Caco-2 (cell line): ENCODE measurements at regions of chr4 and their contacts with region 1.

Region 1: DNA sequence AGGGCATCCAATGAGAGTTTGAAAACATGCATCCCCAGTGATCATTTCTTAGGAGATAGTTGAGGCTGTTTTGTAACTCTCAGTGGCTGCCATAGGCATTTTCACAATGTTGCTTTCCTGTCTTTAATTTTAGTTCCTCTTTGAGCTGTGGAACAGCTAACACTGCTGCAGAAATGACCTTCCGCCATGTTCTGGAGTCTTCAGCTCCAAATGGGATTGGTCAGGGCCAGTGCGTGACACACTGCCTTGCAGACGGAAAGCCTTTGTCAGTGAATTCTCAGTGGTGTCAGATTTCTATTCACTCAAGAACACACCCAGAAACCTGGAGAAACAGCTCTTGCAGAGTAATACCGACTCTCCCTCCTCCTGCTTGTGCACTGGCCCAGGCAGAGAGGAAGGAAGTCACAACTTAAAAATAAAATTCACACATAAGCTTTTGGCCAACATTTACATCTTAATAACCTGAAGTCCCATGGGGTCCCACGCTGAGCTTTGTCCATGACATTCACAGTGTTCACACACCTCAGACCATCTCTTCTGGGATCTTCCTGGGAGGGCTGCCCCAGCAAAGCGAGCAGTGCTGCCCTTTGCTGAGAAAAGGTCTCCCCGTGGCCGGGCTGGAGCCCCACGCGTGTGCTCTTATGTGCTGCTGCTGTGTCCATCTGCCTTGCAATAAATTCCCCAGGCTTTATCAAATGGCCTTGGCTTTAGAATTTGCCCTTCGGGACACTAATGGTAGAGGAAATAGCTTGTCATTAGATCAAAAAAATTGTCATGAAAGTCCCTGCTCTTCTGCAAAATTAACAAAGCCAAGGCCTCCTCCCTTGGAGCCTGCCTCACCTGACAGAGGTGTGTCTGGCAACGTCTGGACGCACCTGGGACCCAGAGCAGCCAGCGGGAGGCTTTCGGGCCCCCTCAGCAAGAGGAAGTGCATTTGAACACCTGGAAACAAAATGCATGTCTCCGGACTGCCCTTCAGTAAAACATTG is 126.8 kb downstream of the IRF2 start:
- DNase-seq: peak in 1 of 2 experiments; percentile 29
- H3K4me3 ChIP-seq: no peak overlapping the region
- H3K4me3 Mint-ChIP-seq: peak overlapping the region; percentile 71
- H3K27ac Mint-ChIP-seq: peak overlapping the region; percentile 94
- H3K4me1 ChIP-seq: peaks cover 36% of the 10 kb centered on the region
- H3K4me1 Mint-ChIP-seq: peaks cover 42% of the 10 kb centered on the region
- H3K27me3 ChIP-seq: no peaks in the 10 kb centered on the region
- H3K27me3 Mint-ChIP-seq: no peaks in the 10 kb centered on the region
- CTCF ChIP-seq: no peak

Region 2: GRCh38 chr4:184156163-184156920 is 191.2 kb before region 1 on chr4:
- CTCF ChIA-PET with region 1: no interaction called
- POLR2A ChIA-PET with region 1: no interaction called
- intact Hi-C with region 1: no loop called
- DNase-seq: no peak
- H3K4me3 ChIP-seq: no peak overlapping the region
- H3K4me3 Mint-ChIP-seq: no peak overlapping the region
- H3K27ac Mint-ChIP-seq: no peak overlapping the region
- H3K4me1 ChIP-seq: no peaks in the 10 kb centered on the region
- H3K4me1 Mint-ChIP-seq: no peaks in the 10 kb centered on the region
- H3K27me3 ChIP-seq: no peaks in the 10 kb centered on the region
- H3K27me3 Mint-ChIP-seq: peaks cover 24% of the 10 kb centered on the region
- CTCF ChIP-seq: no peak

Region 3: DNA sequence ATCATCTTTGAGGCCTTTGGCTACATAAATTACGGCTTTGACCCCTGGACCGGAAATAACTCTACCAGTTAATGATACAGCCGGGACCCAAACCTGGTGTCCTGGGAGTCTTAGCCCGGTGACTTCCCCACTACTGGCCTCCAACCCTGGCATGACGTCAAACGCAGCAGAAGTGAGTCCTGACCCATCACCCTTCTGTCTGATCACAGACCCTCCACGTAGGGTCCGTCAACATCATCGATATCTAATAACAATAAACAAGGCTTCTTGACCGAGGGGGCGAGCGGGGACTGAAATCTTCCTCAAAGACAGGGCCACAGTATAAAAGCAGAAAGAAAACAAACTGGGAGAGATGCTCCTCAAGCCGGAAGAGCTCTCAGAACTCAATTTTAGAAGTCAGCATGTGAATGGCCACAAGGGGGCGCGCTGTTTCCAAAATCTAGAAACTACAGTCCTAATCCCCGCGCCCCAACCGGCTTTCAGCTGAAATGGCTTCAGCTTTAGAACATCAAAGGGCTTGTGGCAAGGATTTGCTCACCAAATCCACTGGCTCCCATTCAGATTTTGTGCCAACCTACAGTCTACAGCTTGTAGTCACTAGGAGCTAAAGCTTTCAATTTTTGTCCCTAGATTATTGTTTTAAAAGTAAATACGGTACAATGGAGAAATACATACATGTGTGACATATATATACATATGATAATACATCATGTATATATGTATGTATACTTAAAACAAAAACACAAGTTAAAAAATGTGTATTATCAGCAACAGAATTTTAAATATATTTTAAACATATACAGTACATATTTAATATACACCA is 83.4 kb before region 1 on chr4:
- CTCF ChIA-PET with region 1: interaction called, 5 read pairs
- POLR2A ChIA-PET with region 1: no interaction called
- intact Hi-C with region 1: loop called (anchors 2 kb)
- DNase-seq: peak; percentile 85 to 86
- H3K4me3 ChIP-seq: no peak overlapping the region
- H3K4me3 Mint-ChIP-seq: peak overlapping the region; percentile 13
- H3K27ac Mint-ChIP-seq: no peak overlapping the region
- H3K4me1 ChIP-seq: no peaks in the 10 kb centered on the region
- H3K4me1 Mint-ChIP-seq: peaks cover 14% of the 10 kb centered on the region
- H3K27me3 ChIP-seq: no peaks in the 10 kb centered on the region
- H3K27me3 Mint-ChIP-seq: peaks cover 3% of the 10 kb centered on the region
- CTCF ChIP-seq: peak; percentile 81

Region 4: GRCh38 chr4:184293552-184293951 is 54.0 kb before region 1 on chr4:
- CTCF ChIA-PET with region 1: interaction called, 7 read pairs
- POLR2A ChIA-PET with region 1: no interaction called
- intact Hi-C with region 1: loop called (anchors 1 kb)
- DNase-seq: peak in 1 of 2 experiments; percentile 54
- H3K4me3 ChIP-seq: no peak overlapping the region
- H3K4me3 Mint-ChIP-seq: no peak overlapping the region
- H3K27ac Mint-ChIP-seq: no peak overlapping the region
- H3K4me1 ChIP-seq: peaks cover 6% of the 10 kb centered on the region; the same call in 1 of the 2 replicates
- H3K4me1 Mint-ChIP-seq: peaks cover 3% of the 10 kb centered on the region
- H3K27me3 ChIP-seq: no peaks in the 10 kb centered on the region
- H3K27me3 Mint-ChIP-seq: no peaks in the 10 kb centered on the region
- CTCF ChIP-seq: no peak

Region 5: GRCh38 chr4:184384056-184384809 is 36.7 kb after region 1 on chr4:
- CTCF ChIA-PET with region 1: no interaction called
- POLR2A ChIA-PET with region 1: no interaction called
- intact Hi-C with region 1: loop called (anchors 1 kb)
- DNase-seq: peak; percentile 66 to 70
- H3K4me3 ChIP-seq: no peak overlapping the region
- H3K4me3 Mint-ChIP-seq: peak overlapping the region; percentile 62
- H3K27ac Mint-ChIP-seq: peak overlapping the region; percentile 43
- H3K4me1 ChIP-seq: peaks cover 57% of the 10 kb centered on the region
- H3K4me1 Mint-ChIP-seq: peaks cover 39% of the 10 kb centered on the region
- H3K27me3 ChIP-seq: no peaks in the 10 kb centered on the region
- H3K27me3 Mint-ChIP-seq: no peaks in the 10 kb centered on the region
- CTCF ChIP-seq: no peak

Region 6: DNA sequence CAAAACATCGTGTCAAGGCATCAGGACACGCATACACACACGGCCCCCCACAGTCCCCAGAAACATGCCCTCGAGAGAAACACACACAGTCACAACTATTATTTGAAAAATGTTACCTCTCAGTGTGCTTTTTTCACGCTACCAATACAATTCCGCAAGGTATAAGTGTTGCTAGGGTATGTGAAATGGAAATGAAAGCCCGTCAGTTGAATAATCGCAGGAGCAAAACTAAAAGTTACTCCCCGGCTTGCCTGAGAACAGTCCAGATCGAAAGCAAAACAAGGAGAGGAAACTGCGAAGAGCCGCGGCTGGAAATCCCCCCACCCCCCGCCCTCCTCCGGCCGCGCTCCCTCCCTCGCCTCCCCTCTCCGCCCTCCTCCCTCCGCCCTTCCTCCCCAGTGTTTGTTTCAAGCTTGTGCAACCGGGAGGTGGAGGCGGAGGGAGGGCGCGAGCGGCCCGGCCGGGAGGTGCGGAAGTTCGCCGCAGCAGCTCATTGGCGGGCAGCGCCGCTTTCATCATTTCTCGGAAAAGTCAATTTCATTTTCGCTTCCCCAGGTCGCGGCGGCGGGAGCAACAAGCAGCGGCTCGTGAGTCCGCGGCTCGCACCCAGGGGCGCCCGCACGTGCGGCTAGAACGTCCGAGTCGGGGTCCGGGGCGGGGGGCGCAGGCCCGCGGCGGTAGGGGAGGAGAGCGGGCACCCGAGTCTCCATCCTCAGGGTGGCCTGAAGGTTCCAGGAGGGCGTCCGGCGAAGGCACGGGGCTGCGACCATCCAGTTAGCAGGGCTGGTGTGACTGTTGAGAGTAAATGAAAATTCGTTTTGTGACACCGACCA is 126.9 kb after region 1 on chr4 and contains the start of gene IRF2:
- CTCF ChIA-PET with region 1: no interaction called
- POLR2A ChIA-PET with region 1: interaction called, 11 read pairs
- intact Hi-C with region 1: loop called (anchors 1 kb)
- DNase-seq: peak; percentile 94 to 96
- H3K4me3 ChIP-seq: peak within 1 kb of the TSS; percentile 70
- H3K4me3 Mint-ChIP-seq: peak within 1 kb of the TSS; percentile 98
- H3K27ac Mint-ChIP-seq: peak within 1 kb of the TSS; percentile 89
- H3K4me1 ChIP-seq: peaks cover 2% of the 10 kb centered on the region
- H3K4me1 Mint-ChIP-seq: peaks cover 20% of the 10 kb centered on the region
- H3K27me3 ChIP-seq: no peaks in the 10 kb centered on the region
- H3K27me3 Mint-ChIP-seq: no peaks in the 10 kb centered on the region
- CTCF ChIP-seq: no peak
- total RNA-seq, gene IRF2: 9.2 and 11.5 TPM in 2 replicates